A549 (cell line): ENCODE measurements at regions of chr5 and their contacts with region 1.

Region 1: GRCh38 chr5:79621042-79621441 is 8.8 kb downstream of the TENT2 start:
- DNase-seq: peak in 1 of 2 experiments; percentile 32
- ATAC-seq: peak; percentile 60 to 88; a peak in 5 of 6 replicates
- H3K4me3 ChIP-seq: no peak overlapping the region
- H3K27ac ChIP-seq: no peak overlapping the region
- H3K4me1 ChIP-seq: peaks cover 7% of the 10 kb centered on the region; the same call in 1 of the 3 replicates
- CTCF ChIP-seq: no peak
- EP300 ChIP-seq: no peak
- POLR2A ChIP-seq: no peak
- RAD21 ChIP-seq: no peak

Region 2: DNA sequence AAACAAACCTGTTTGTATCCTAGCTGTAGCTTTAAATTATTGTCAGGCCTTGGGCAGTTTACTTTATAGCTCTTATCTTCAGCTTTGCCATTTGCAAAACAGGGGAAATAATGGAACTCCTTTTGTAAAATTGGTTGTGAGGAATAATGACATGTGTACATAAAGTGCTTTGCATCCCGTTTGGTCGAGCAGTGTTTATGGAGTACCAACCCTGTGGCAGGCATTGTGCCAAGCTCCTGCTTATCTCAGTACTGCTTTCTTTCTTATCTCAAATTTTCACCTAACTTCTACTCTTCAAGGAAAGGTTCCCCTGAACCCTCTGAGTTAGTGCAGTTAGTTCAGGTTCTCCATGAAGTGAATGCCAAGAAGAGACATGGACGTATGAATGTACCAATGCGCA is 18.2 kb before region 1 on chr5:
- CTCF ChIA-PET with region 1: no interaction called
- POLR2A ChIA-PET with region 1: interaction called, 10 read pairs
- DNase-seq: no peak
- ATAC-seq: no peak
- H3K4me3 ChIP-seq: no peak overlapping the region
- H3K27ac ChIP-seq: no peak overlapping the region
- H3K4me1 ChIP-seq: no peaks in the 10 kb centered on the region
- CTCF ChIP-seq: no peak
- EP300 ChIP-seq: no peak
- POLR2A ChIP-seq: no peak
- RAD21 ChIP-seq: no peak

Region 3: GRCh38 chr5:79653843-79654242 is 32.8 kb after region 1 on chr5:
- CTCF ChIA-PET with region 1: no interaction called
- POLR2A ChIA-PET with region 1: no interaction called
- DNase-seq: no peak
- ATAC-seq: no peak
- H3K4me3 ChIP-seq: no peak overlapping the region
- H3K27ac ChIP-seq: no peak overlapping the region
- H3K4me1 ChIP-seq: no peaks in the 10 kb centered on the region
- CTCF ChIP-seq: no peak
- EP300 ChIP-seq: no peak
- POLR2A ChIP-seq: no peak
- RAD21 ChIP-seq: no peak

Region 4: GRCh38 chr5:79759436-79759835 is 138.4 kb after region 1 on chr5:
- CTCF ChIA-PET with region 1: no interaction called
- POLR2A ChIA-PET with region 1: no interaction called
- DNase-seq: no peak
- ATAC-seq: no peak
- H3K4me3 ChIP-seq: no peak overlapping the region
- H3K27ac ChIP-seq: no peak overlapping the region
- H3K4me1 ChIP-seq: no peaks in the 10 kb centered on the region
- CTCF ChIP-seq: no peak
- EP300 ChIP-seq: no peak
- POLR2A ChIP-seq: no peak
- RAD21 ChIP-seq: no peak